Panc1 (cell line): ENCODE measurements at regions of chr3 and their contacts with region 1.

Region 1: DNA sequence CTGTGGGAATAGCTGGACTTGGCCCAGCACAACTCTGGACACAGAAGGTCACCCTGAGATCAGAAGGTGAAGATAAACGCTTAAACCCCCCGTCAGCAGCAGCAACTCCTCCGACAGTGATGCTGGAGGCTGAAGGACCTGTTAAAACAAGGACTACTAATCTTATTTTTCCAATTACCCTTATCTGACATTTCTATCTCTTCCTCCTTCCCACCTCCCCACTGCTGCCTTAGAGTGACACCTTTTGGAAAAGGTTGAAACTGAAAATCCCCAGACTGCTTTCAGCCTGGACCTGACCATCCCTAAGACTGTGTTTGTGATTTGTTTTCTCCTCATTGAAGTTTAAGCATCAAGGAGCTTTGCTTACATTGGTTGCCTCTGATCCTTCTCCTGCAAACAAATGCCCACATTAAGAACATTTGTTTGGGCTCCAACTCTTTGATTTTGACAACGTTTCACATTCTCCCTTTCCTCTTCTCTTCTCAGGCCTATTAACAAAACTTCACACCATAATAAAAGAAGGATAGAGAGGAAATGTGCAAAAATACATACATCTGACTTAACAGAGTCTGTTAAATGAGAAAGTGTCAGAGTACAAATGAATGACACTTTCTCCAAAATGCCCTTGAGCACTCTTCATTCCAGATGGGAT is 410.6 kb upstream of the WNT5A start:
- DNase-seq: no peak
- ATAC-seq: peak; percentile 56; the same call in 1 of the 2 replicates
- H3K4me3 ChIP-seq: no peak overlapping the region
- H3K27ac ChIP-seq: no peak overlapping the region
- H3K4me1 ChIP-seq: no peaks in the 10 kb centered on the region
- H3K27me3 ChIP-seq: no peaks in the 10 kb centered on the region
- CTCF ChIP-seq: peak; percentile 43

Region 2: GRCh38 chr3:54837964-54838363 is 1059.7 kb before region 1 on chr3:
- CTCF ChIA-PET with region 1: no interaction called
- POLR2A ChIA-PET with region 1: no interaction called
- in situ Hi-C with region 1: no loop called
- intact Hi-C with region 1: loop called (anchors 5 kb)
- DNase-seq: no peak
- ATAC-seq: no peak
- H3K4me3 ChIP-seq: no peak overlapping the region
- H3K27ac ChIP-seq: no peak overlapping the region
- H3K4me1 ChIP-seq: no peaks in the 10 kb centered on the region
- H3K27me3 ChIP-seq: no peaks in the 10 kb centered on the region
- CTCF ChIP-seq: peak; percentile 30; the same call in 1 of the 2 replicates

Region 3: DNA sequence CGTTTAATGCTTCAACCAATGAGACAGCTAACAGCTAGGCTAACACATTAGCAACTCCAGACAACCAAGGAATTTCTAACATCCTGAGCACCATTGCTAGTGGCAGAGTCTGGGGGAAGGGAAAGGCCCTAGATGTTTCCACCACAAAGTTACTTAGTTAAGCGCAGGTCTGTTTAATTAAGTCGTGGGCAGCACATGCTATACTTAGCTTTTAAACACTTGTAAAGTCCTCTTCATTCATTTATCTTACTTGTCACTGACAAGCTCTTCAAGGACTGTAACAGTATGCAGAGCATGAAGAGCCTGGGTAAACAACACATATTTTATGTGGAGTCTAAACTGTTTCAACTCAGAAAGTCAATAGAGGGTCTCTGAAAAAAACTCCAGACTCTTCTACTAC is 189.5 kb before region 1 on chr3:
- CTCF ChIA-PET with region 1: no interaction called
- POLR2A ChIA-PET with region 1: no interaction called
- in situ Hi-C with region 1: no loop called
- intact Hi-C with region 1: no loop called
- DNase-seq: no peak
- ATAC-seq: no peak
- H3K4me3 ChIP-seq: no peak overlapping the region
- H3K27ac ChIP-seq: no peak overlapping the region
- H3K4me1 ChIP-seq: no peaks in the 10 kb centered on the region
- H3K27me3 ChIP-seq: no peaks in the 10 kb centered on the region
- CTCF ChIP-seq: no peak

Region 4: DNA sequence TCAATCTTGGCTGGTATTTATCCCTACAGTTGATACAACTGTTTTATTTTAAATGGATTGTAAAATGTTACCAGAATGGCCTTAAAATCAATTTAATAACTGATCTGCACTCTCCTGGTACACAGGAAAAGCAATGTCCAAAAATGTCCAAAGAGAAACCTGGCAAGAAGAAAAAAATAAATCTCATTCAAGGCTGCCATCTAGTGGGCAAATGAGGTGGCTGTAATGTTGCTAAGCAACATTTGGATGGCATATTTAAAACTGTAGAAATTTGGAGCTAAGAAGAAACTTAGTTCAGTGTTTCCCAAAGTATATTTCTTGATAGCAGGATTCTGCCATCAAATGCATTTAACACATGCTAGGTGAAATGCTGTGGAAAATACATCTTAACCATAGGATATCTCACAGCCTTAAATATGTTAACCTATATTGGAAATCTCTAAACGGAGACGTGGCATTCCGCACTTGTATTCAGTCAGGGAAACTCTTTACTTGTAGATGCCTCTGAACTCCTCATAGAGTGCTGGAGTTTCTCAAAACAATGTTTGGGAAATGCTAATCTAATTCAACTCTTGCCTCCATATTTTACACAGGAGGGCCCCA is 353.7 kb after region 1 on chr3:
- CTCF ChIA-PET with region 1: interaction called, 4 read pairs
- POLR2A ChIA-PET with region 1: no interaction called
- in situ Hi-C with region 1: no loop called
- intact Hi-C with region 1: loop called (anchors 2 kb)
- DNase-seq: peak; percentile 18
- ATAC-seq: 0 out of 2 replicates have a peak, but pooled peaks have one; percentile 38
- H3K4me3 ChIP-seq: no peak overlapping the region
- H3K27ac ChIP-seq: no peak overlapping the region
- H3K4me1 ChIP-seq: no peaks in the 10 kb centered on the region
- H3K27me3 ChIP-seq: no peaks in the 10 kb centered on the region
- CTCF ChIP-seq: peak; percentile 69; the same call in 1 of the 2 replicates